ENCODE measurements at regions of chr15 and their contacts with region 1.

Region 1: DNA sequence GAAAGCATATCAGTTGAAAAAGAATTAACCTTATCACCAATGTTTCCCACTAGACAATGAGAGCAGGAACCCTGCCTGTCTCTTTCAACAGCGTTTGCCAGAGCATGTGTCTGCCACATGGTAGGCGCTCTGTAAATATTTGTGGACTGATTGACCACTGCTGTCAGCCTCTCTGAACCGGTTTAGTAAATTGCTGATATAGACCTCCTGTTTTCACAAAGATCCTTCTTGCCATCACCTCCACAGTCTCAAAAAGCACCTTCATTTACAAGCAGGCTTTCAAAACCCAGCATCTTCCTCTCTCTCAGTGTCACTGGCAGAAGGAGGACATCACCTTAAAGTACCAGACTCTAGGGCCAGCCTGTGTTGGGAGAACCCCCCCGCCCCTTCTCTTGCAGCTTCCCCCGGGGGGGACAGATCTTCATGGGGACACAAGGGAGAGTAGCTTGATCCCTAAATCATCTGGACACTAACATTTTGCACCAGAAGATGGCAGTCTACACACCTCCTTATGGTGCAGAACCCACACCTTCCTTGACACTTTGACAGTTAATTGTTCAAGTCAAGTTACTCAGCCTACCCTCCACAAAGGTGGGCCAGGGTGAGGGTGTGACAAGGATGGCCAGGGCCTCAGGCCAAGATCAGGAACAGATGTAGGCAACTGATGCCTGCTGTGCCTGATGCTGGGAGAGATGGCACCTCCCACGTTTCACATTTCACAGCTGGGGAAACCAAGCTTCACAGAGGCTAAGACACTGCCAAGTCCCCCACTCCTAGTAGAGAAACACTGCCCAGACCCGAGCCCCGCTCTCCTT is 37.8 kb upstream of the USP3 start:
- DNase-seq: peak; percentile 77
- ATAC-seq: peak; percentile 93
- H3K4me3 Mint-ChIP-seq: no peak overlapping the region
- H3K27ac Mint-ChIP-seq: no peak overlapping the region
- H3K4me1 Mint-ChIP-seq: peaks cover 9% of the 10 kb centered on the region
- H3K27me3 Mint-ChIP-seq: peaks cover 5% of the 10 kb centered on the region

Region 2: DNA sequence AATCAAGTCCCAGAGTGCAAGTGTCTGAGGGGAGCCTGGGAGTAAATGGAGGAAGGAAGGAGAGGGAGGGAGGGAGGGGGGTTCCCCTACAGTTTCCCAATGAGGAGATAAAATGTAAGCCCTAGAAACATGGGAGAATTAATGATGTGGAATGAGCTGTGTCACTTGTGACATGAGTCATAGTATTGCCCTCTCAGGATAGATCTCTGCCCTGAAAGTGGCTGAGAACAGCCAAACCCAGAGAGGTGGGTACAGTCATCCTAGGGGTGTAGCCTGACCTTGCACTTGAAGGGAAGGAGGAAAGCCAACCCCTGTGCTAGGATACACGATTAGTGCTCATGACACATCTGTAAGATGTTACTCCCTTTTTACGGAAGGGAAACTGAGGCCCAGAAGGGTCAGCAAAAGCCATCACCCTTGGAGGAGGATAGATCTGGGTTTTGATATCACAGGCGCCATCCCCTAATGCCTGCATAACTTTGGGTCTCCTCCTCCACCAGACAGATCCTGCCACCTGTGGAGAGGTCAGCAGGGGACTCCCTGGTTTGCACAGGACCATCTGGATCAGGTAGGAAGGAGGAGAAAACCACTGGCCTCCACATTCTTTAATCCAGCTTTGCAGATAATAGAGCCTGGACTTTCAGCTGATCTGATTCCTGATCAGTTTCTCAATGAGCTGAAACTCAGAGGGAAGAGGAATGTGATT is 14.7 kb after region 1 on chr15:
- CTCF ChIA-PET with region 1: interaction called, 36 read pairs
- POLR2A ChIA-PET with region 1: no interaction called
- DNase-seq: no peak
- ATAC-seq: no peak
- H3K4me3 Mint-ChIP-seq: no peak overlapping the region
- H3K27ac Mint-ChIP-seq: no peak overlapping the region
- H3K4me1 Mint-ChIP-seq: peaks cover 54% of the 10 kb centered on the region
- H3K27me3 Mint-ChIP-seq: no peaks in the 10 kb centered on the region

Region 3: GRCh38 chr15:63504247-63504978 is 37.8 kb after region 1 on chr15 and contains the start of gene USP3:
- CTCF ChIA-PET with region 1: interaction called, 38 read pairs
- POLR2A ChIA-PET with region 1: interaction called, 17 read pairs
- DNase-seq: peak; percentile 94
- ATAC-seq: peak; percentile 66
- H3K4me3 Mint-ChIP-seq: peak within 1 kb of the TSS; percentile 89
- H3K27ac Mint-ChIP-seq: peak within 1 kb of the TSS; percentile 98
- H3K4me1 Mint-ChIP-seq: peaks cover 81% of the 10 kb centered on the region
- H3K27me3 Mint-ChIP-seq: no peaks in the 10 kb centered on the region
- total RNA-seq, gene USP3: 48.3 to 49.1 TPM

Region 4: GRCh38 chr15:63544258-63545026 is 77.9 kb after region 1 on chr15:
- CTCF ChIA-PET with region 1: interaction called, 19 read pairs
- POLR2A ChIA-PET with region 1: no interaction called
- DNase-seq: no peak
- ATAC-seq: no peak
- H3K4me3 Mint-ChIP-seq: peak overlapping the region; percentile 15
- H3K27ac Mint-ChIP-seq: peak overlapping the region; percentile 60
- H3K4me1 Mint-ChIP-seq: peaks cover 20% of the 10 kb centered on the region
- H3K27me3 Mint-ChIP-seq: no peaks in the 10 kb centered on the region

Region 5: DNA sequence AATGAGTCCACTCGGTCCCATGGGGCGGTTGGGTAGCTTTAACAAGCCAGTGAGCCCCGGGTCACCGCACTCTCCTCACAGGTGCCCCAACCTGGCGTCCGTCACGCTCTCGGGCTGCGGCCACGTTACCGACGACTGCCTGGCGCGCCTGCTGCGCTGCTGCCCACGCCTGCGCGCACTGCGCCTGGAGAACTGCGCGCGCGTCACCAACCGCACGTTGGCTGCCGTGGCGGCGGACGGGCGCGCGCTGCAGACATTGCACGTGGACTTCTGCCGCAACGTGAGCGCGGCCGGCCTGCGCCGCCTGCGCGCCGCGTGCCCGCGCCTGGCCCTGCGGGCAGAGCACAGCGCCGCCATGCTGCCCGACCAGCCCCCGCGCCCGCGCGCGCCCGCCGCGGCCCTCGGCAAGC is 134.0 kb after region 1 on chr15:
- CTCF ChIA-PET with region 1: interaction called, 23 read pairs
- POLR2A ChIA-PET with region 1: interaction called, 3 read pairs
- DNase-seq: peak; percentile 90
- ATAC-seq: peak; percentile 81
- H3K4me3 Mint-ChIP-seq: peak overlapping the region; percentile 88
- H3K27ac Mint-ChIP-seq: peak overlapping the region; percentile 90
- H3K4me1 Mint-ChIP-seq: peaks cover 63% of the 10 kb centered on the region
- H3K27me3 Mint-ChIP-seq: peaks cover 3% of the 10 kb centered on the region

Region 6: GRCh38 chr15:63677730-63678129 is 211.1 kb after region 1 on chr15:
- CTCF ChIA-PET with region 1: no interaction called
- POLR2A ChIA-PET with region 1: no interaction called
- DNase-seq: no peak
- ATAC-seq: no peak
- H3K4me3 Mint-ChIP-seq: no peak overlapping the region
- H3K27ac Mint-ChIP-seq: no peak overlapping the region
- H3K4me1 Mint-ChIP-seq: peaks cover 9% of the 10 kb centered on the region
- H3K27me3 Mint-ChIP-seq: no peaks in the 10 kb centered on the region